IMR-90 (cell line): ENCODE measurements at regions of chr11 and their contacts with region 1.

Region 1: GRCh38 chr11:95705485-95706124 is 84.0 kb downstream of the FAM76B start:
- DNase-seq: peak; percentile 81
- ATAC-seq: peak; percentile 90
- H3K4me3 ChIP-seq: no peak overlapping the region
- H3K27ac ChIP-seq: no peak overlapping the region
- H3K4me1 ChIP-seq: peaks cover 6% of the 10 kb centered on the region
- H3K27me3 ChIP-seq: peaks cover 9% of the 10 kb centered on the region
- CTCF ChIP-seq: peak; percentile 97
- POLR2A ChIP-seq: 0 out of 2 replicates have a peak, but pooled peaks have one; percentile 46
- RAD21 ChIP-seq: peak; percentile 97

Region 2: DNA sequence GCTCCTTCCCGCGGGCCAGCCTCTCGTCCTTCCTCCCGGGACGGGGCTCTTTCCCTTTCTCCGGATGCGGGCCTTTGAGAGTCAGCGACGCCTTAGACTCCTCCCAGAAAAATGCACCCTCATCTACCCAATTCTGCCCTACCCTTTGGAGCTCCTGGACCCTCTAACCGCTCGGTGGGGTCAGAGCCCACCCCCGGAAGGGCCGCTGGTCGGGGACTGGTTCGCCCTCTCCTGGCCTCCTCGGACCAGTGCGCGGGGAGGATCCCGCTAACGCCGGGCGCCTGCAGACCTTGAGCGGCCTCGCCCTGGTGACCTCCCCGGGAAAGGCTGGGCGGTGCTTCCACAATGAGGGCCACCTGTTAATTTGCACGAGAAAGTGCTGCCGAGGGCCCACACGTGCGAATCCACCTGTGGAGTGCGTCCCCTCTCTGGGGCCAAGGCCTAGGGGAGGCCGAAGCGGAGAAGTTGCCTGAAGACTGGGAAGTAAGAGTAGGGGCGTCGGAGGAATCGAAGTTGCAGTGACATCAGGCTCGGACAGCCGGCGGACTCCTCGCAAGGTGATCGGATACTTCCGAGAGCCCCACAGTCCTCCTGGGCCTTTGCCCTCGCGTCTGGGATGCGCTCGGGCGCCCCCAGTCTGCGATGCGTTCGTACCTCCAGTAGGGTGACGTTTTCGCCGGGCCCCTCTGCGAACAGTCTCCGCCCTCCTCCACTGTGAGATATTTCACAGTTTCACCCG is 554.5 kb before region 1 on chr11:
- CTCF ChIA-PET with region 1: interaction called, 45 read pairs
- POLR2A ChIA-PET with region 1: no interaction called
- dilution Hi-C with region 1: no loop called
- in situ Hi-C with region 1: loop called (anchors 5 kb)
- intact Hi-C with region 1: loop called (anchors 1 kb)
- DNase-seq: peak; percentile 78
- ATAC-seq: peak; percentile 91
- H3K4me3 ChIP-seq: peak overlapping the region; percentile 35
- H3K27ac ChIP-seq: no peak overlapping the region
- H3K4me1 ChIP-seq: peaks cover 7% of the 10 kb centered on the region; the same call in 1 of the 2 replicates
- H3K27me3 ChIP-seq: 0 out of 2 replicates have a peak, but pooled peaks cover 2% of the 10 kb centered on the region
- CTCF ChIP-seq: peak; percentile 89
- POLR2A ChIP-seq: no peak
- RAD21 ChIP-seq: no peak

Region 3: DNA sequence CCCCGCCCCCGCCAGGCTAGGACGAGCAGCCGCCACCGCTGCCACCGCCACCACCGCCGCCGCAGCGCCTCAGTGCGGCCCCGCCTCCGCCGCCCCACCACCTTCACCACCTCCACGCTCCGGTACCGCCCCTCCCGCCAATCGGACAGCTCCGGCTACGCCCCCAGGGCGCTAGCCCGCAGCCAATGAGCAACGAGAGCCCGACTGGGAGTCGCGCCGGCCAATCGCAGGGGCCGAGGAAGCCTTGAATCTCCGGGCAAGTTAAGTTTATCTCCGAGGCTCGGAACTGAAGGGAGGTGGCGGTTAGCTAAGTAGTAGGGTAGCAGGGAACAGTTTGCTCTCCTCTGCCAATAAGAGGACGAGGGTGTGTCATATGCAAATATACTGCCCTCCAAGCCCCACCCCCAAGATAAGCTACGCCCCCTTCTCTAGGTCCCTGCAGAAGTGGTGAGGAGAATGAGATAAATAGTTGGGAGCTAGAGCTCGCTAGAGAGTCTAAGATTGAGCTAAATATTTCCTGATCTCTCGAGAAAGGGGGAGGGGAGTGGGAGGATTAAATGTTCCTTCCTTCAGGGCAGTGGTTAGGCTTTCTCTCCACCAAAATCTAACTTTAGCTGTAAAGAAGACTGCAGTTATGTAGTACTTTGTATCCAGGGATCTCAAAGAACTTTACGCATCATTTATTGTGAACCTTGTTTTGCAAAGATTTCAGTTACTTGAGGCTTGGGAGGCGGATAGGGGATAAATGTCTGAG is 474.3 kb before region 1 on chr11 and contains the start of gene SESN3:
- CTCF ChIA-PET with region 1: interaction called, 7 read pairs
- POLR2A ChIA-PET with region 1: no interaction called
- dilution Hi-C with region 1: no loop called
- in situ Hi-C with region 1: no loop called
- intact Hi-C with region 1: loop called (anchors 1 kb)
- DNase-seq: peak; percentile 96
- ATAC-seq: peak; percentile 97
- H3K4me3 ChIP-seq: peak within 1 kb of the TSS; percentile 51
- H3K27ac ChIP-seq: peak within 1 kb of the TSS; percentile 81; the same call in 1 of the 2 replicates
- H3K4me1 ChIP-seq: no peaks in the 10 kb centered on the region
- H3K27me3 ChIP-seq: no peaks in the 10 kb centered on the region; the same call in 1 of the 2 replicates
- CTCF ChIP-seq: no peak
- POLR2A ChIP-seq: no peak
- RAD21 ChIP-seq: no peak
- total RNA-seq, gene SESN3: 7.7 and 10.0 TPM in 2 replicates

Region 4: GRCh38 chr11:95364324-95365295 is 341.0 kb before region 1 on chr11:
- CTCF ChIA-PET with region 1: no interaction called
- POLR2A ChIA-PET with region 1: no interaction called
- dilution Hi-C with region 1: no loop called
- in situ Hi-C with region 1: no loop called
- intact Hi-C with region 1: no loop called
- DNase-seq: no peak
- ATAC-seq: no peak
- H3K4me3 ChIP-seq: no peak overlapping the region
- H3K27ac ChIP-seq: no peak overlapping the region
- H3K4me1 ChIP-seq: no peaks in the 10 kb centered on the region; the same call in 1 of the 2 replicates
- H3K27me3 ChIP-seq: peaks cover 16% of the 10 kb centered on the region
- CTCF ChIP-seq: no peak
- POLR2A ChIP-seq: no peak
- RAD21 ChIP-seq: no peak

Region 5: DNA sequence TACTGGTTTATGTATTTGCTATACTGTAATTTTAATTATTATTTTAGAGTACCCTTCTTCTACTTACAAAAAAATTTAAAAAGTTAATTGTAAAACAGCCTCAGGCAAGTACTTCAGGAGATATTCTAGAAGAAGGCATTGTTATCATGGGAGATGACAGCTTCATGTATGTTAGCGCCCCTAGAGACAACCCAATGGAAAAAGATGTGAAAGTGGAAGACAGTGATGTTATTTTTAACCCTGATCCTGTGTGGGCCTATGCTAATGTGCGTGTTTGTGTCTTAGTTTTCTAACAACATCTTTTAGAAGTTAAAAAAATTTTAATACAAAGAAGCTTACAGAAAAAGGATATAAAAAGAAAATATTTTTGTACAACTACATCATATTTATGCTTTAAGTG is 121.0 kb before region 1 on chr11:
- CTCF ChIA-PET with region 1: no interaction called
- POLR2A ChIA-PET with region 1: no interaction called
- dilution Hi-C with region 1: no loop called
- in situ Hi-C with region 1: no loop called
- intact Hi-C with region 1: loop called (anchors 1 kb)
- DNase-seq: no peak
- ATAC-seq: no peak
- H3K4me3 ChIP-seq: no peak overlapping the region
- H3K27ac ChIP-seq: no peak overlapping the region
- H3K4me1 ChIP-seq: peaks cover 8% of the 10 kb centered on the region
- H3K27me3 ChIP-seq: no peaks in the 10 kb centered on the region
- CTCF ChIP-seq: no peak
- POLR2A ChIP-seq: no peak
- RAD21 ChIP-seq: no peak